GM12878 (cell line): ENCODE measurements at regions of chr3 and their contacts with region 1.

Region 1: GRCh38 chr3:186783073-186783730 is at the start of gene EIF4A2:
- DNase-seq: no peak
- ATAC-seq: peak; percentile 78
- H3K4me3 ChIP-seq: peak within 1 kb of the TSS; percentile 78
- H3K27ac ChIP-seq: peak within 1 kb of the TSS; percentile 100
- H3K4me1 ChIP-seq: no peaks in the 10 kb centered on the region
- H3K27me3 ChIP-seq: no peaks in the 10 kb centered on the region
- CTCF ChIP-seq: no peak
- EP300 ChIP-seq: 0 out of 4 replicates have a peak, but pooled peaks of 1 of the 2 experiments have one; percentile 11
- POLR2A ChIP-seq: peak; percentile 92
- RAD21 ChIP-seq: no peak
- polyA plus RNA-seq, gene EIF4A2: 216 to 263 TPM

Region 2: GRCh38 chr3:185937689-185938463 is 845.3 kb before region 1 on chr3 and contains the start of gene TRA2B:
- CTCF ChIA-PET with region 1: no interaction called
- POLR2A ChIA-PET with region 1: interaction called, 4 read pairs
- RAD21 ChIA-PET with region 1: no interaction called
- SMC1A ChIA-PET with region 1: interaction called, 4 read pairs
- in situ Hi-C with region 1: loop called (anchors 25 kb)
- intact Hi-C with region 1: loop called (anchors 5 kb)
- DNase-seq: peak; percentile 90
- ATAC-seq: peak; percentile 87
- H3K4me3 ChIP-seq: peak within 1 kb of the TSS; percentile 95
- H3K27ac ChIP-seq: peak within 1 kb of the TSS; percentile 100
- H3K4me1 ChIP-seq: no peaks in the 10 kb centered on the region
- H3K27me3 ChIP-seq: no peaks in the 10 kb centered on the region
- CTCF ChIP-seq: peak; percentile 30 to 31 (median 31); a peak in 4 of 6 replicates
- EP300 ChIP-seq: no peak; a peak in 2 of 4 replicates
- POLR2A ChIP-seq: peak; percentile 100
- RAD21 ChIP-seq: no peak
- polyA plus RNA-seq, gene TRA2B: 130 to 153 TPM

Region 3: GRCh38 chr3:186570096-186570940 is 212.9 kb before region 1 on chr3 and contains the start of gene DNAJB11:
- CTCF ChIA-PET with region 1: no interaction called
- POLR2A ChIA-PET with region 1: interaction called, 14 read pairs
- RAD21 ChIA-PET with region 1: interaction called, 4 read pairs
- SMC1A ChIA-PET with region 1: no interaction called
- in situ Hi-C with region 1: no loop called
- intact Hi-C with region 1: loop called (anchors 2 kb)
- DNase-seq: peak; percentile 98
- ATAC-seq: peak; percentile 90
- H3K4me3 ChIP-seq: peak within 1 kb of the TSS; percentile 90
- H3K27ac ChIP-seq: peak within 1 kb of the TSS; percentile 85
- H3K4me1 ChIP-seq: peaks cover 10% of the 10 kb centered on the region
- H3K27me3 ChIP-seq: no peaks in the 10 kb centered on the region
- CTCF ChIP-seq: no peak
- EP300 ChIP-seq: no peak
- POLR2A ChIP-seq: peak; percentile 92
- RAD21 ChIP-seq: no peak
- polyA plus RNA-seq, gene DNAJB11: 16.2 to 26.4 TPM

Region 4: GRCh38 chr3:186772701-186773424 is 10.3 kb before region 1 on chr3:
- CTCF ChIA-PET with region 1: interaction called, 12 read pairs
- POLR2A ChIA-PET with region 1: interaction called, 4 read pairs
- RAD21 ChIA-PET with region 1: no interaction called
- SMC1A ChIA-PET with region 1: interaction called, 3 read pairs
- in situ Hi-C with region 1: no loop called
- intact Hi-C with region 1: no loop called
- DNase-seq: no peak
- ATAC-seq: peak; percentile 96
- H3K4me3 ChIP-seq: peak overlapping the region; percentile 67
- H3K27ac ChIP-seq: no peak overlapping the region
- H3K4me1 ChIP-seq: peaks cover 5% of the 10 kb centered on the region; the same call in 1 of the 2 replicates
- H3K27me3 ChIP-seq: no peaks in the 10 kb centered on the region
- CTCF ChIP-seq: no peak
- EP300 ChIP-seq: no peak
- POLR2A ChIP-seq: peak; percentile 30; the same call in 1 of the 2 replicates
- RAD21 ChIP-seq: no peak

Region 5: DNA sequence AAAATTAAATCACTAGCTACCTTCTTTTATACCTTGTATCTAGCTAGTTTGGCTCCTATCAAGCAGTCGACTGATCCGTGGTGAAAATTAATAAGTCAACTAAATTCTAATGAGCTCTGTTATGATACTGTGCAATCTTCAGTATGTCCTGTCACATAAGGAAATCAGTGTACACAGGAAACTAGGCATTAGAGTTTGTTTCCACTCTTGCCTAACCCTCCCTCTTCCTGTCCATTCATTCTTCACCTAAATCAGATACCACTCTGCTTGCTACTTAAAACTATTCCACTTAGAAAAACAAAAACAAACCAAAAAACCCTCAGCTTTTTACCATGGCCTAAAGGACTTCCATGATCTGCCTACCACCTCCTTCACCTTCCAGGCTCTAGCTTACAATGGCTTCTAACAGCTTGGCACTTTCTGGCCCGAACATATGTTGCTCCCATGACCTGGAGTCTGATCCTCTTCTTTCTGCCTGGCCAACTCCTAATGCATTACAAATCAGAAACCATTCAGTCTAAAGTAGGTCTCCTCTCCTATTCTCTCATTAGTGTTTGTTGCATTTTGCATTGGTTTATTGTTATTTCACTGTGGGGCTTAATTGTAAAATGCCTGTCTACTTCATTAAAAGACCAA is 15.2 kb after region 1 on chr3:
- CTCF ChIA-PET with region 1: interaction called, 3 read pairs
- POLR2A ChIA-PET with region 1: interaction called, 14 read pairs
- RAD21 ChIA-PET with region 1: no interaction called
- SMC1A ChIA-PET with region 1: interaction called, 4 read pairs
- in situ Hi-C with region 1: no loop called
- intact Hi-C with region 1: no loop called
- DNase-seq: no peak
- ATAC-seq: peak; percentile 48; the same call in 2 of the 3 replicates
- H3K4me3 ChIP-seq: no peak overlapping the region
- H3K27ac ChIP-seq: no peak overlapping the region
- H3K4me1 ChIP-seq: peaks cover 6% of the 10 kb centered on the region; the same call in 1 of the 2 replicates
- H3K27me3 ChIP-seq: no peaks in the 10 kb centered on the region
- CTCF ChIP-seq: no peak
- EP300 ChIP-seq: no peak
- POLR2A ChIP-seq: no peak
- RAD21 ChIP-seq: no peak

Region 6: GRCh38 chr3:186806089-186807055 is 23.2 kb after region 1 on chr3 and contains the start of gene RFC4:
- CTCF ChIA-PET with region 1: no interaction called
- POLR2A ChIA-PET with region 1: interaction called, 24 read pairs
- RAD21 ChIA-PET with region 1: interaction called, 3 read pairs
- SMC1A ChIA-PET with region 1: interaction called, 17 read pairs
- in situ Hi-C with region 1: no loop called
- intact Hi-C with region 1: loop called (anchors 1 kb)
- DNase-seq: no peak
- ATAC-seq: peak; percentile 91
- H3K4me3 ChIP-seq: peak within 1 kb of the TSS; percentile 78
- H3K27ac ChIP-seq: peak within 1 kb of the TSS; percentile 74
- H3K4me1 ChIP-seq: peaks cover 14% of the 10 kb centered on the region
- H3K27me3 ChIP-seq: no peaks in the 10 kb centered on the region
- CTCF ChIP-seq: no peak
- EP300 ChIP-seq: no peak
- POLR2A ChIP-seq: peak; percentile 81
- RAD21 ChIP-seq: no peak
- polyA plus RNA-seq, gene RFC4: 122 to 139 TPM